ENCODE measurements at regions of chr9 and their contacts with region 1.

Region 1: GRCh38 chr9:35903049-35903448 is 3.0 kb upstream of the HRCT1 start:
- DNase-seq: peak in 6 of 9 experiments; percentile 24 to 72 (median 44)
- ATAC-seq: peak; percentile 62
- H3K4me3 ChIP-seq: no peak overlapping the region
- H3K4me3 Mint-ChIP-seq: no peak overlapping the region
- H3K27ac ChIP-seq: no peak overlapping the region
- H3K27ac Mint-ChIP-seq: no peak overlapping the region
- H3K4me1 ChIP-seq: peaks cover 14% of the 10 kb centered on the region
- H3K4me1 Mint-ChIP-seq: peaks cover 12% of the 10 kb centered on the region
- H3K27me3 ChIP-seq: no peaks in the 10 kb centered on the region
- H3K27me3 Mint-ChIP-seq: peaks cover 4% of the 10 kb centered on the region
- CTCF ChIP-seq: peak; percentile 85

Region 2: GRCh38 chr9:35646153-35646532 is 256.9 kb before region 1 on chr9:
- CTCF ChIA-PET with region 1: no interaction called
- POLR2A ChIA-PET with region 1: no interaction called
- intact Hi-C with region 1: no loop called
- DNase-seq: no peak
- ATAC-seq: no peak
- H3K4me3 ChIP-seq: peak overlapping the region; percentile 71 to 82
- H3K4me3 Mint-ChIP-seq: peak overlapping the region; percentile 93
- H3K27ac ChIP-seq: peak overlapping the region; percentile 67 to 89
- H3K27ac Mint-ChIP-seq: peak overlapping the region; percentile 95
- H3K4me1 ChIP-seq: peaks cover 49% of the 10 kb centered on the region
- H3K4me1 Mint-ChIP-seq: peaks cover 61% of the 10 kb centered on the region
- H3K27me3 ChIP-seq: no peaks in the 10 kb centered on the region
- H3K27me3 Mint-ChIP-seq: no peaks in the 10 kb centered on the region
- CTCF ChIP-seq: no peak

Region 3: DNA sequence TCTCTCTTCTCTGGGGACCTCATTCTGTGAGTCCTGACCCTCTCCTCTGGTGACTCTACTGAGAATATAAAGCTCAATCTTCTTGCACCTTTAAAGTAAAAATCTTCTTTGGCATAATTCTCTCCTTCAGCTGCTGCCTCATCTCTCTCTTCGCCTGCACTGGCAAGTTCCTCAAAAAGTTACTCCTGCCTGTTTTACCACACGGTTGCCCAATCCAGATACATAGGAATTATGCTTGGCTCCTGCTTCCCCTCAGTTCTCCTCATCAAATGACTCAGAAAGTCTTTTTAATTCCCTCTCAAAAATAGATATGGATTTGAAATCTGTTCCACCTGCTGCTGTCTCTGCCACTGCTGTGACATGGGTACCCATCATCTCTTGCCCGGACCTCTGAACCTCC is 11.4 kb before region 1 on chr9:
- CTCF ChIA-PET with region 1: interaction called, 16 read pairs
- POLR2A ChIA-PET with region 1: no interaction called
- intact Hi-C with region 1: no loop called
- DNase-seq: no peak
- ATAC-seq: no peak
- H3K4me3 ChIP-seq: no peak overlapping the region
- H3K4me3 Mint-ChIP-seq: no peak overlapping the region
- H3K27ac ChIP-seq: no peak overlapping the region
- H3K27ac Mint-ChIP-seq: no peak overlapping the region
- H3K4me1 ChIP-seq: no peaks in the 10 kb centered on the region
- H3K4me1 Mint-ChIP-seq: no peaks in the 10 kb centered on the region
- H3K27me3 ChIP-seq: peaks cover 0 to 9% of the 10 kb centered on the region in 2 experiments
- H3K27me3 Mint-ChIP-seq: peaks cover 24% of the 10 kb centered on the region
- CTCF ChIP-seq: no peak

Region 4: GRCh38 chr9:35920051-35920620 is 17.1 kb after region 1 on chr9:
- CTCF ChIA-PET with region 1: interaction called, 18 read pairs
- POLR2A ChIA-PET with region 1: interaction called, 4 read pairs
- intact Hi-C with region 1: no loop called
- DNase-seq: no peak
- ATAC-seq: no peak
- H3K4me3 ChIP-seq: no peak overlapping the region
- H3K4me3 Mint-ChIP-seq: no peak overlapping the region
- H3K27ac ChIP-seq: no peak overlapping the region
- H3K27ac Mint-ChIP-seq: no peak overlapping the region
- H3K4me1 ChIP-seq: no peaks in the 10 kb centered on the region
- H3K4me1 Mint-ChIP-seq: peaks cover 3% of the 10 kb centered on the region
- H3K27me3 ChIP-seq: no peaks in the 10 kb centered on the region
- H3K27me3 Mint-ChIP-seq: no peaks in the 10 kb centered on the region
- CTCF ChIP-seq: no peak

Region 5: GRCh38 chr9:35935755-35936509 is 32.9 kb after region 1 on chr9:
- CTCF ChIA-PET with region 1: interaction called, 199 read pairs
- POLR2A ChIA-PET with region 1: no interaction called
- intact Hi-C with region 1: no loop called
- DNase-seq: no peak
- ATAC-seq: no peak
- H3K4me3 ChIP-seq: no peak overlapping the region
- H3K4me3 Mint-ChIP-seq: no peak overlapping the region
- H3K27ac ChIP-seq: no peak overlapping the region
- H3K27ac Mint-ChIP-seq: no peak overlapping the region
- H3K4me1 ChIP-seq: peaks cover 36% of the 10 kb centered on the region
- H3K4me1 Mint-ChIP-seq: peaks cover 44% of the 10 kb centered on the region
- H3K27me3 ChIP-seq: no peaks in the 10 kb centered on the region
- H3K27me3 Mint-ChIP-seq: no peaks in the 10 kb centered on the region
- CTCF ChIP-seq: no peak

Region 6: GRCh38 chr9:35945341-35946018 is 42.4 kb after region 1 on chr9:
- CTCF ChIA-PET with region 1: interaction called, 199 read pairs
- POLR2A ChIA-PET with region 1: no interaction called
- intact Hi-C with region 1: loop called (anchors 1 kb)
- DNase-seq: peak; percentile 27 to 72 (median 62)
- ATAC-seq: peak; percentile 70
- H3K4me3 ChIP-seq: no peak overlapping the region
- H3K4me3 Mint-ChIP-seq: no peak overlapping the region
- H3K27ac ChIP-seq: no peak overlapping the region
- H3K27ac Mint-ChIP-seq: no peak overlapping the region
- H3K4me1 ChIP-seq: peaks cover 30% of the 10 kb centered on the region
- H3K4me1 Mint-ChIP-seq: peaks cover 48% of the 10 kb centered on the region
- H3K27me3 ChIP-seq: no peaks in the 10 kb centered on the region
- H3K27me3 Mint-ChIP-seq: no peaks in the 10 kb centered on the region
- CTCF ChIP-seq: peak; percentile 80

Region 7: GRCh38 chr9:35954942-35955546 is 52.0 kb after region 1 on chr9:
- CTCF ChIA-PET with region 1: interaction called, 17 read pairs
- POLR2A ChIA-PET with region 1: no interaction called
- intact Hi-C with region 1: no loop called
- DNase-seq: peak in 8 of 9 experiments; percentile 12 to 80 (median 46)
- ATAC-seq: peak; percentile 67
- H3K4me3 ChIP-seq: no peak overlapping the region
- H3K4me3 Mint-ChIP-seq: no peak overlapping the region
- H3K27ac ChIP-seq: no peak overlapping the region
- H3K27ac Mint-ChIP-seq: no peak overlapping the region
- H3K4me1 ChIP-seq: no peaks in the 10 kb centered on the region
- H3K4me1 Mint-ChIP-seq: peaks cover 2% of the 10 kb centered on the region
- H3K27me3 ChIP-seq: peaks cover 0 to 3% of the 10 kb centered on the region in 2 experiments
- H3K27me3 Mint-ChIP-seq: peaks cover 12% of the 10 kb centered on the region
- CTCF ChIP-seq: peak; percentile 86

Region 8: DNA sequence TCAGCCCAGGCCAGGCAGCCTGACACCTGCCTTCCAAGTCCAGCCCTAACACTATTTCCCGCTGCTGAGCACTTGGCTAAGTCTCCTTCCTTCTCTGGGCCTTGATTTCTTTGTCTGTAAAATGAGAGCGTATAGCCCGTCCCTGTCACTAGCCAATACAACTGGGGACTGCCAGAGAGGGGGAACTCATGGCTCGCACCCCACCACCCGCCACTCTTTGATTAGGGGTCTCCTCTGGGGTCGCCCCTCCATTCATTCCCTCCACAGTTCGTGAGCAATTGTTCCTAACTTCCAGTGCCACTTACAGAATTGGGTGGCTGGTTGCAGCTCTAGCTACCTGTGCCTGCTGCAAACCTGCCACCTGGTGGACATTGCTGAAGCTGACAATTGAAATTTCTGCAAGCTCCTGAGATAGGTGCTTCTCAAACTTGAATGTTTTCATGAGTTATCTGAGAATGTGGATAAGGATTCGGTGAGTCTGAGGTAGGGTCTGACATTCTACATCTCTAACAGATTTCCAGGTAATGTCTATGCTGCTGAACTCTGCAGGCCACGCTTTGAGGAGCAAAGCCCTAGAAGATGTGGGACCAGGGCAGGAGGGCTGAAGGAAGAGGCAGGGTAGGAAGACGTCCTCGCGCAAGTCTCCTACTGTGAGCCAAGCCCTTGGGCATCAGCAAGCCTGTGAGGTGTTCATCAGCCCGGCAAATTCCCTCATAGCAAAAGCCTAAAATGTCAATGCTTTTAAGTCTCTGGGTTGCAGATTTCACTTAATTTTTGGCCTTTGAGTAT is 120.4 kb after region 1 on chr9:
- CTCF ChIA-PET with region 1: interaction called, 10 read pairs
- POLR2A ChIA-PET with region 1: no interaction called
- intact Hi-C with region 1: loop called (anchors 1 to 2 kb)
- DNase-seq: peak; percentile 42 to 78 (median 65)
- ATAC-seq: peak; percentile 88
- H3K4me3 ChIP-seq: no peak overlapping the region
- H3K4me3 Mint-ChIP-seq: no peak overlapping the region
- H3K27ac ChIP-seq: no peak overlapping the region
- H3K27ac Mint-ChIP-seq: no peak overlapping the region
- H3K4me1 ChIP-seq: no peaks in the 10 kb centered on the region
- H3K4me1 Mint-ChIP-seq: peaks cover 2% of the 10 kb centered on the region
- H3K27me3 ChIP-seq: no peaks in the 10 kb centered on the region
- H3K27me3 Mint-ChIP-seq: peaks cover 5% of the 10 kb centered on the region
- CTCF ChIP-seq: peak; percentile 88